Posterior vena cava (tissue), 2 donors: ENCODE measurements at regions of chr3 and their contacts with region 1.

Region 1: DNA sequence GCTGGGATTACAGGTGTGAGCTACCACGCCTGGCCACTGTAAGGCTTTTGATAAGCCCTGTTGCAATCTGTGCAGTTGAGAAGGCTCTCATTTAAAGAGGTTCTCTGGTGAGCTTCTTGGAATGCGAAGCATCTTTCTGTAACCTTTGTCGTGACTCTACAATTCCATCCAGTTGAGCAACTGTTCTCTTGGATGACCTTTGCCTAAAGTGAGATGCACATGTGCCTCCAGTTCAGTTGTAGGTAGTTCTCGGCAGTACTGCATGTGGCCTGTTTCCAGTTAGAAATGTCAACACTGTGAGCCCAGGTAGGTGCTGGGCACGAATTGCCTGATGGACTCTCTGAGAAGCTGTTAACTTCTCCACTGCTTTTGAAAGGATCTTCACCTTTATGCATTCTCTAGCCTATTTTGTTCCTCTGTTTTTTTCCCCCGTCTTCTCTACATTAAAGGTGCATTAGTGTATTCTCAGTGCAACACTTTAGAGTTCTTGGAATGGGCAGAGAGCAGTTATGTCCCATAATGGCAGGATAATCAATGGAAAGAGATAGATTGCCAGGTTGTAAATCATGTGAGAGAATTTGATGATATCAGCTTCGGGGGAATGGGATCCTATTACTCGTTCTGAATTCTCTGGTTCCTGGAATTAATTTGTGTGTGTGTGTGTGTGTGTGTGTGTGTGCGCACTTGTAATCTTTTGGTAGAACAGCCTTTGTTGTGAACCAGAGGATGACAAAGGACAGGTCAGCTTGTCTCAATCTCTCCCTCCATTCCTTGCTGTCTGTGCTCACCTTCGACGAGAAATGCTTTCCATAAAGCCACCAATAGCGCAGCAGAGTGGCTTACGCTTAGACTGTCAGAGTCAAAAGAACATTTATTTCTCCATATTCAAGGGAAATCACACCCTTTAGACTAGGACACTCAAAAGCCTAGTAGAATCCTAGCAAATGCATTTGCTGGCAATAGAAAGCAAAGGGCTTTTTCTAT is 51.1 kb downstream of the PTPRG start:
- DNase-seq: no peak

Region 2: GRCh38 chr3:61796098-61796680 is 183.7 kb after region 1 on chr3:
- intact Hi-C with region 1: no loop called
- DNase-seq: no peak

Region 3: DNA sequence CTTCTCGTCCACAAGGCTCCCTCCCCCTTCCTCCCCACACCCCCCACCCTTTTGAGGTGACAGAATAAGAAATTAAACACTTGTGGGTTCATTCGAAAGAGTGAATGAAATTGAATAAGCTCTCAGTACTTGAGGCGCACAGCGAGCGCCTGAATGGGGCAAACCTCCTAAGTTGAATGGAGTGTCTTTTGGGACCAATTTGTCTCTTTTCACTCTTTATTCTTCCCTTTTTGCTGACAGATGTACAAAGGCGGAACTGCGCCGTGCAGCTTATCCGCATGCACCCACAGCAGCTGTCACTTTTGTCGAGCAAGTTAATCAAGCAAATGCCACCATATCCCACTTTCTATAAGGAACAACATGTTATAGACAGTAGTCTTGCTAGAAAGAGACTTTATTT is 808.7 kb after region 1 on chr3:
- intact Hi-C with region 1: loop called in 1 of 2 experiments (anchors 5 kb)
- DNase-seq: no peak